Right ventricle myocardium superior (tissue), 1 donor: ENCODE measurements at regions of chr6 and their contacts with region 1.

Region 1: DNA sequence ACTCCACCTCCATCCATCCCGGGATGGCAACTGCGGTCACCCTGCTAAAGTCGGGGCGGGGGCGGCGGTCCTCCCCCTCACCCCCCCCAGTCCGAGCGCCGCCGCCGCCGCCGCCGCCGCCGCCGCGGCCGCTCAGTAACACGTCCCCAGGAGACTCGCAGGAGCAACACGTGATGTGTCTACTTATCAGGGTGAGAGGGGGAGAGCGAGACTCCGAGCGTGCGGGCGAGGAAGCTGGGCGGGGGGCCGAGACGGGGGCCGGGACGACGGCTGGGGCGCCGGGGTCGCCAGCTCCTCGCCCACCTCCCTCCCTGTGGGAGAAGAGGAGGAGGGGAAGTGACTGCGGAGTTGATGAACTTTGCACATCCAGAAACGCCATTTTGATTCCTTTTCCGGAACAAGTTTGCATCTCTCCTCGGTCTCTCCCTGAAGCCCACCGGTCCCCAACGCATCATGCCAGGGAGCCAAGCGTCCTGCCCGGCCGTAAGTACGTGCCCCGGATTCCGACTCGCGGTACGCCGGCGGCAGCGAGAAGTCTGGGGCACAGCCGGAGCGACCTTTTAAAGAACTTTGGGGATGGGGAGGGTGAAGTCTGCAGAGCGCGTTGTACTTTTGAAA is at the start of gene RREB1:
- DNase-seq: peak; percentile 67
- ATAC-seq: peak; percentile 80
- total RNA-seq, gene RREB1: 34.2 TPM

Region 2: GRCh38 chr6:7051233-7052114 is 56.2 kb before region 1 on chr6:
- intact Hi-C with region 1: loop called (anchors 10 kb)
- DNase-seq: peak; percentile 77
- ATAC-seq: peak; percentile 83

Region 3: DNA sequence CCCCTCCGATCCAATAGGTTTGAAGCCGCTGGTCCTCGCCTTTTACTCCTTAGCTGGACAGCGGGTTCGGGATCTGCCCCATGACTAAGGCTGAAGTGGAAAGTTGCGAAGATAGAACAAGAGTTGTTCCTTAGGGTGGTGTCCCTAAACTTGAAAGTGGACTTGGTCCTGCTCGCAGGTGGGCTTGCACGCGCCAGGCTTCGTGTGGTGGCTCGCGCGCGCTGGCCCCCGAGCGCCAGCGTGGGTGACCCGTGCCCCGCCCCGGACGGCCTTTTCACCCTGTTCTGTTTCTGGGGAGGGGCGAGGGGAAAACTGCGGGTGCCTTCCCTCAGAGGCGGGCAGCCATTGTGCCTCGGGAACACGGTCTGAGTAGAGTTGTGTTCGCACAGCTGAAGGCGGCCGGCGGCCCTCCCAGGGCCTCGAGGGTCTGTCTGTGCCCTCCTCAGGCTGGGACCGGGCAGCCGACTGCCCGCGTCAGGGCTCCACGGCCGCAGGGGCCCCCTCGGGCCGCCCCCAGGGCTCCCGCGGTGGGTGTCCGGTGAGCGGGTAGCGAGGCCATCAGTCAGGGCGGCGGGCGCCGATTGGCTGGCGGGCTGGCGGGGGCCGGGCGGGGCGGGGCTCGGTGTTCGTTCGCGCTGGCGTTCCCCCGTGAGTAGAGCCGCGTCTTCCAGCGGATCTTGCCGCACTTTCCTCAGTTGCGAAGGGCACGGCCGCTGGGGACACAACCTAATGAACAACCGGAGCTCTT is 33.1 kb after region 1 on chr6:
- intact Hi-C with region 1: no loop called
- DNase-seq: peak; percentile 93
- ATAC-seq: peak; percentile 94